Ascending aorta (tissue), 2 donors: ENCODE measurements at regions of chr6 and their contacts with region 1.

Region 1: GRCh38 chr6:111483736-111484632 is 966 bp upstream of the REV3L start:
- DNase-seq: peak; percentile 92 to 99
- H3K4me3 ChIP-seq: peak overlapping the region; percentile 82 to 98
- H3K27ac ChIP-seq: peak overlapping the region; percentile 97 to 99
- H3K4me1 ChIP-seq: peaks cover 0 to 26% of the 10 kb centered on the region in 2 donors
- H3K27me3 ChIP-seq: no peaks in the 10 kb centered on the region
- CTCF ChIP-seq: no peak

Region 2: DNA sequence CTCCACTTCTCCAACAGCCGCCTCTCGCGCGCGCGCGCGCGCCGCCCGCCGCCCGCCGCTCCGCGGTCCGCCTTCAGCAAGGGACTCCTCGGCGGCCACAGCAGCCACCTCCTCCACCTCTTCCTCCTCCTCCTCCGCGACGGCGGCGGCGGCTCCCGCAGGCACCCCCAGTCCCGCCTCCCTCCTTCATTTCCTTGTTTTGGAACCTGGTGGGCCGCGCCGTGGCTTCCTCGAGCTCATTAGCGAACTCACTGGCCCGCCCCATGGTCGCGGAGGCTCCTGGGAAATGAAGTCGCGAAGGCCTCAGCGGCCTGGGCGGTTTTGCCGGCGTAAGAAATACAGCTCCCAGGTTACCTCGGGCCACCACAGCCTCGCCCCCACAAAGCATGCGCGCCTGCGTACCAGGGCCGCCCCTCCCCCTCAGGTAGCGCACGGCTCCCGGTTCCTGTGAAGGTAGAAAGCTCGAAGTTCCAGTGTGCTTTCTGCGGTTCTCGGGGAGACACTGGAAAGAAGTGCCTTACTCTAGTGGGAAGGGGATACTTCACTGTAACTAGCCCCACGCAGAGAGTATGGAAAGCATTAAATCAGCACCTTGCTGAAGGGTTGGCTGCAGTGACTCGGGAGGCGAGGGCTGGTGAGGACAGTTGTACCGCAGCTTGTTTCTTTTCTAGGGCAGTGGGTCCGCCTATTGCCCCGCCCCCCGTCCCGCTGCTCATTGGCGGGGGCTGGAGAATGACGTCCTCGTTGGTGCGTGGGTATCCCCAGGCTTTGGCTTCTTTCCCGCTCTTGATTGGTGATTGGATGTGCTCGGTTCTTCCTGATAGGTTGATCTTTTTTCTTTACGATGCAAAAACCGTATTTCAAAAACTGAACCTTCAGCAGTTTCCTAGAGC is 668.5 kb before region 1 on chr6 and contains the start of gene CDK19:
- intact Hi-C with region 1: loop called (anchors 5 kb)
- DNase-seq: peak; percentile 96 to 99
- H3K4me3 ChIP-seq: peak within 1 kb of the TSS; percentile 97
- H3K27ac ChIP-seq: peak within 1 kb of the TSS; percentile 93 to 98
- H3K4me1 ChIP-seq: peaks cover 3 to 6% of the 10 kb centered on the region in 2 donors
- H3K27me3 ChIP-seq: no peaks in the 10 kb centered on the region
- CTCF ChIP-seq: no peak
- total RNA-seq, gene CDK19: 5.2 TPM

Region 3: GRCh38 chr6:111382476-111383300 is 101.3 kb before region 1 on chr6:
- intact Hi-C with region 1: loop called (anchors 5 kb)
- DNase-seq: no peak
- H3K4me3 ChIP-seq: no peak overlapping the region
- H3K27ac ChIP-seq: peak overlapping the region; percentile 64 to 76
- H3K4me1 ChIP-seq: peaks cover 0 to 16% of the 10 kb centered on the region in 2 donors
- H3K27me3 ChIP-seq: no peaks in the 10 kb centered on the region
- CTCF ChIP-seq: no peak

Region 4: DNA sequence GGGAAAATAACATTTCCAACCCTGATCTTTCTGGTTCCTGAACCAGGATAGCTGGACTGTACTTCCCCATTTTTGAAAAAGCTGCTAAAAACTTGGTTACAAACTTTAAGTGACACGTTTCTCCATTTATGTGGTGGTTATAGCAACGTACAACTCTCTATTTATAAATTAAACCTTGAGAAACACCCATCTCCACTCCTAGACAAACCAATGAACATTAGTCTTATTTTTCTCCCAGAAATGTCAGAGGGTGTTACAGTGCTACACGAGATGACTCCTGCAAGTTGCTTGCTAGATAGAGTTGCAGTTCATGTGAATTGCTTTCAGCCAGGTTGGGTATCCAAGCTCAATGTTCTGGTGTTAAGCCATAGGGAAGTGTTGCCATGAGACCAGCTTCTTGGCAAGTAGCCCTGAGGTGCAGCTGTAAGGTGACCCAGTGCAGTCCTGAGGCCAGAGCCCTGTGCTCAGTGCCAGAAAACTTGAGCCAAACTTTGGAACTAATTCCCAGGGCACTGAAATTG is 50.3 kb after region 1 on chr6:
- intact Hi-C with region 1: no loop called
- DNase-seq: no peak
- H3K4me3 ChIP-seq: no peak overlapping the region
- H3K27ac ChIP-seq: no peak overlapping the region
- H3K4me1 ChIP-seq: peaks cover 0 to 6% of the 10 kb centered on the region in 2 donors
- H3K27me3 ChIP-seq: no peaks in the 10 kb centered on the region
- CTCF ChIP-seq: no peak

Region 5: DNA sequence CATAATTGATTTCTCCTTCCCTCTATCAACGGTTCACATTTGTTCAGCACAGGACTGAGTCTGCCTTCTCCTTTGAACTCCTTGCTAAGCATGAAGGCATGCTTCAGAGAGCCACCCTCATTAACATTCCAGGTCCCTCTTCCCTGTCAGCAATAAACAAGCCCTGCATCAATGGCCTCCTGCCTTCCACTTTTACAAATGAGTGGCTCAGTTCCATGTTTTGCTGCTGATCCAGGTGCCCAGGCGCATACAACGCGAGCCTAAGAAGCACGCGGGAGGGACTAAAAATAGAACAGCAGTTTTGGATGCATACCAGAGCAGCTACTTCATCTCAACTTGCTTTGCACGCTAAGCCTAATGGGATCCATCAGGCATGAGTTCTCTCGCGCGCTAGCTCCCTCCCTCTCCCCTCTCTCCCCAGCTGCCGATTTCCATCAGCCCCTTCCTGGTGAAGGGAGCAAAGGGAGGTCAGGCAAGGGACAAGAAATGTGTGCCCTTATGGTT is 68.3 kb after region 1 on chr6:
- intact Hi-C with region 1: loop called (anchors 2 kb)
- DNase-seq: peak in 1 of 2 donors; percentile 87
- H3K4me3 ChIP-seq: peak overlapping the region in 1 of 2 donors; percentile 37
- H3K27ac ChIP-seq: peak overlapping the region; percentile 66 to 74
- H3K4me1 ChIP-seq: peaks cover 7 to 25% of the 10 kb centered on the region in 2 donors
- H3K27me3 ChIP-seq: no peaks in the 10 kb centered on the region
- CTCF ChIP-seq: no peak

Region 6: GRCh38 chr6:111625461-111626391 is 141.7 kb after region 1 on chr6:
- intact Hi-C with region 1: loop called (anchors 5 kb)
- DNase-seq: peak in 1 of 2 donors; percentile 75
- H3K4me3 ChIP-seq: peak overlapping the region; percentile 14 to 57
- H3K27ac ChIP-seq: peak overlapping the region; percentile 52 to 77
- H3K4me1 ChIP-seq: peaks cover 0 to 20% of the 10 kb centered on the region in 2 donors
- H3K27me3 ChIP-seq: no peaks in the 10 kb centered on the region
- CTCF ChIP-seq: no peak

Region 7: GRCh38 chr6:112037783-112038216 is 553.8 kb after region 1 on chr6:
- intact Hi-C with region 1: loop called (anchors 10 kb)
- DNase-seq: peak; percentile 54 to 96
- H3K4me3 ChIP-seq: no peak overlapping the region
- H3K27ac ChIP-seq: peak overlapping the region; percentile 83 to 93
- H3K4me1 ChIP-seq: peaks cover 5 to 29% of the 10 kb centered on the region in 2 donors
- H3K27me3 ChIP-seq: no peaks in the 10 kb centered on the region
- CTCF ChIP-seq: no peak